ENCODE measurements at regions of chr10 and their contacts with region 1.

Region 1: GRCh38 chr10:26588611-26589010 is 108.9 kb upstream of the PDSS1 start:
- DNase-seq: no peak
- ATAC-seq: no peak
- H3K4me3 ChIP-seq: no peak overlapping the region
- H3K4me3 Mint-ChIP-seq: no peak overlapping the region
- H3K27ac ChIP-seq: no peak overlapping the region
- H3K27ac Mint-ChIP-seq: no peak overlapping the region
- H3K4me1 ChIP-seq: no peaks in the 10 kb centered on the region
- H3K4me1 Mint-ChIP-seq: no peaks in the 10 kb centered on the region
- H3K27me3 ChIP-seq: no peaks in the 10 kb centered on the region
- H3K27me3 Mint-ChIP-seq: no peaks in the 10 kb centered on the region
- CTCF ChIP-seq: no peak

Region 2: GRCh38 chr10:26528715-26529393 is 59.8 kb before region 1 on chr10:
- CTCF ChIA-PET with region 1: no interaction called
- POLR2A ChIA-PET with region 1: no interaction called
- intact Hi-C with region 1: no loop called
- DNase-seq: no peak
- ATAC-seq: no peak
- H3K4me3 ChIP-seq: no peak overlapping the region
- H3K4me3 Mint-ChIP-seq: no peak overlapping the region
- H3K27ac ChIP-seq: peak overlapping the region in 1 of 2 donors; percentile 11
- H3K27ac Mint-ChIP-seq: peak overlapping the region; percentile 23
- H3K4me1 ChIP-seq: no peaks in the 10 kb centered on the region
- H3K4me1 Mint-ChIP-seq: peaks cover 17% of the 10 kb centered on the region
- H3K27me3 ChIP-seq: no peaks in the 10 kb centered on the region
- H3K27me3 Mint-ChIP-seq: no peaks in the 10 kb centered on the region
- CTCF ChIP-seq: no peak

Region 3: GRCh38 chr10:26939290-26939961 is 350.8 kb after region 1 on chr10:
- CTCF ChIA-PET with region 1: no interaction called
- POLR2A ChIA-PET with region 1: no interaction called
- intact Hi-C with region 1: loop called (anchors 5 kb)
- DNase-seq: no peak
- ATAC-seq: no peak
- H3K4me3 ChIP-seq: no peak overlapping the region
- H3K4me3 Mint-ChIP-seq: no peak overlapping the region
- H3K27ac ChIP-seq: no peak overlapping the region
- H3K27ac Mint-ChIP-seq: no peak overlapping the region
- H3K4me1 ChIP-seq: no peaks in the 10 kb centered on the region
- H3K4me1 Mint-ChIP-seq: no peaks in the 10 kb centered on the region
- H3K27me3 ChIP-seq: no peaks in the 10 kb centered on the region
- H3K27me3 Mint-ChIP-seq: no peaks in the 10 kb centered on the region
- CTCF ChIP-seq: no peak

Measured in B cell (primary cell).